HepG2 (cell line): ENCODE measurements at regions of chr11 and their contacts with region 1.

Region 1: DNA sequence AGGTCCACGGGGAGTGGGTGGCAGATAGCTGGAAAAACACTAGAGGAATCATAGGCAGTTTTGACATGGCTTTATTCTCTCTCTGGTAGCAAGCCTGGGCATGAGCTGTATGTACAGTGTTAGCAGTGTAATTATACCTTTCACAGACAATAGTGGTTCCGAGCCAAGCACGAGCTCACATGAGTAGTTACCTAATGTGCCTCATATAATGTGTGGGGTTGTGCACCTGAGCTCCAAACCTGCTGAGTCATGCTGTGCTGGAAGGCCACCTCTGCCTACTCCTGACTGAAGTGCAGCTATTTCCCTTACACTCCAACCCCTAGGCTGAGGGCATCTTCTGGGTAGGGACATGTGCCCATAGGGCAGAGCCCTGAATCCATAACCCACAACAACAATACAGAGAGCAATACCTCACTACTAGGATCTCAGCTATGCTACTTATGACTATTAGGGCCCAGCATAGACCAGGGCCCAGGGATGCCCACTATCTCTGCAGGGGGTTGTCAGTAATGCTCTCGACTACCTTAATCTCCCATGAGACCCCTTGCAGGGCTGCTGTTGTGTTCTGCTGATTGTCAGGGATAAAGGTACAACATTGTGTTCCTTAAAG is 432.1 kb downstream of the DYNC2H1 start:
- DNase-seq: no peak
- ATAC-seq: no peak
- H3K4me3 ChIP-seq: no peak overlapping the region
- H3K27ac ChIP-seq: no peak overlapping the region
- H3K4me1 ChIP-seq: no peaks in the 10 kb centered on the region
- H3K27me3 ChIP-seq: no peaks in the 10 kb centered on the region
- CTCF ChIP-seq: no peak
- EP300 ChIP-seq: no peak
- POLR2A ChIP-seq: no peak
- RAD21 ChIP-seq: no peak

Region 2: DNA sequence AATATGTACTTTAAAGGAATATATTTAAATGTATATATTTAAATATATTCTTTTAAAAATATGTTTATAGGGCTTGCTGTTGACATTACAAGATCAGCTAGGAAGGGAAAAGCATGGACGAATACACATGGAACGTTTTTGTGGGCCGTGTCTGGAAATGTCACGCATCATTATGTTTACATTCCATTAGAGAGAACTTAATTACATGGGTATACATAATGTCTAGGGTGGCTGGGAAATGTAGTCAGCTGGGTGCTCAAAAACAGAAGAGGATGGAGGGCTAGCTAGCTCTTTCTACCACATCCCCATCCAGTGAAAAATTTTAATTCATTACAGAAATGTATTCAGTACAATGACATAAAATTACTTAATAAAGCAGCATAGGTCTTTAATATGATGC is 60.9 kb before region 1 on chr11:
- CTCF ChIA-PET with region 1: no interaction called
- POLR2A ChIA-PET with region 1: no interaction called
- in situ Hi-C with region 1: no loop called
- intact Hi-C with region 1: no loop called
- DNase-seq: no peak
- ATAC-seq: no peak
- H3K4me3 ChIP-seq: no peak overlapping the region
- H3K27ac ChIP-seq: no peak overlapping the region
- H3K4me1 ChIP-seq: no peaks in the 10 kb centered on the region
- H3K27me3 ChIP-seq: no peaks in the 10 kb centered on the region
- CTCF ChIP-seq: no peak
- EP300 ChIP-seq: no peak
- POLR2A ChIP-seq: no peak
- RAD21 ChIP-seq: no peak

Region 3: GRCh38 chr11:103609117-103610066 is 68.1 kb after region 1 on chr11:
- CTCF ChIA-PET with region 1: no interaction called
- POLR2A ChIA-PET with region 1: no interaction called
- in situ Hi-C with region 1: no loop called
- intact Hi-C with region 1: loop called (anchors 2 kb)
- DNase-seq: no peak
- ATAC-seq: peak; percentile 46; the same call in 2 of the 3 replicates
- H3K4me3 ChIP-seq: no peak overlapping the region
- H3K27ac ChIP-seq: no peak overlapping the region
- H3K4me1 ChIP-seq: no peaks in the 10 kb centered on the region
- H3K27me3 ChIP-seq: no peaks in the 10 kb centered on the region
- CTCF ChIP-seq: no peak
- EP300 ChIP-seq: no peak
- POLR2A ChIP-seq: no peak
- RAD21 ChIP-seq: no peak